Heart right ventricle (tissue), 16 donors: ENCODE measurements at regions of chr3 and their contacts with region 1.

Region 1: DNA sequence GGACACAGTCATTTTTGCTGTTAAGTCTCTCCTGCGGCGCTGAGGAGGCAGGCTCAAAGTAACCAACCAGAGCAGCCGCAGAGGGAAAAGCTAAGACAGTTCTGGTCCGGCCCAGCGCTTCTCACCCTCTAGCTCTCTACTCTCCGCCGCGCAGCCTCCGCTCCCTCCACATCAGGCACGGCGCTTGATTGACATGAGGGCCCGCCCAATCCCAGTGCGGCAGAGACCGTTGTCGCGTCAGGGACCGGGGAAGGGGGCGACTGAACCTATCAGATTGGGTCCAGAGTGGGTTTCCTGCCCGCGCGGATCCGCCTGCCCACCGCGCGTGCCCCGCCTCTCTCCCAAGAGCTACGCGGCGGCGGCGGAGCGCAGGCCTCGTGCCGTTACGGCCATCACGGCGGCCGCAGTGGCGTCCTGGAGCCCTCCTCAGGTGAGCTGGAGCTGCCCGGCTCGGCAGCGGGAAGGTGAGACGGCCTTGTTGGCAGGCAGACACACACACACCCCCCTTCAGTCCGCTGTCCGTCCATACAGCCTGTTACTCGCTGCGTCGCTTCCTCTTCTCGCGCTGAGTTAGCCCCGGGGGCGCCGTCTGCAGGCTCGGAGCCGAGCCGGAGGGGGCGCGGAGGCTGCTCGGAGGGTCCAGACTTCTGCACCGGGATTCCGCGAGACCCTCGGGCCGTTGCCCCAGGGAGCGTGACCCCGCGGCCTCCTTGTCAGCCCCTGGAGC is at the start of gene NCK1:
- DNase-seq: peak; percentile 98 to 99
- ATAC-seq: peak; percentile 98 to 100 (median 99)
- H3K4me3 ChIP-seq: peak within 1 kb of the TSS; percentile 58 to 98 (median 93)
- H3K27ac ChIP-seq: peak within 1 kb of the TSS; percentile 81 to 97 (median 94)
- H3K4me1 ChIP-seq: peaks cover 0 to 60% (median 35%) of the 10 kb centered on the region in 9 donors
- H3K27me3 ChIP-seq: no peaks in the 10 kb centered on the region
- CTCF ChIP-seq: peak in 4 of 9 donors; percentile 21 to 42 (median 31)
- total RNA-seq, gene NCK1: 17.0 to 31.8 (median 23.0) TPM

Region 2: GRCh38 chr3:136818769-136819391 is 43.2 kb before region 1 on chr3 and contains the start of gene SLC35G2:
- intact Hi-C with region 1: loop called in 5 of 10 experiments (anchors 2 to 5 kb)
- DNase-seq: peak; percentile 61 to 72
- ATAC-seq: peak; percentile 75 to 93 (median 88)
- H3K4me3 ChIP-seq: peak within 1 kb of the TSS; percentile 59 to 77 (median 72)
- H3K27ac ChIP-seq: peak within 1 kb of the TSS; percentile 80 to 93 (median 90)
- H3K4me1 ChIP-seq: peaks cover 0 to 32% (median 17%) of the 10 kb centered on the region in 9 donors
- H3K27me3 ChIP-seq: peaks cover 0 to 43% (median 0%) of the 10 kb centered on the region in 7 donors
- CTCF ChIP-seq: peak in 4 of 9 donors; percentile 6 to 34 (median 28)
- total RNA-seq, gene SLC35G2: 1.7 to 5.1 (median 2.4) TPM

Region 3: GRCh38 chr3:136929984-136930670 is 68.1 kb after region 1 on chr3:
- intact Hi-C with region 1: loop called in 4 of 10 experiments (anchors 5 to 10 kb)
- DNase-seq: peak; percentile 25 to 62
- ATAC-seq: peak in 7 of 8 donors; percentile 72 to 87 (median 84)
- H3K4me3 ChIP-seq: peak overlapping the region; percentile 14 to 51 (median 39)
- H3K27ac ChIP-seq: peak overlapping the region in 9 of 10 donors; percentile 9 to 74 (median 47)
- H3K4me1 ChIP-seq: peaks cover 0 to 67% (median 43%) of the 10 kb centered on the region in 9 donors
- H3K27me3 ChIP-seq: no peaks in the 10 kb centered on the region
- CTCF ChIP-seq: no peak

Region 4: DNA sequence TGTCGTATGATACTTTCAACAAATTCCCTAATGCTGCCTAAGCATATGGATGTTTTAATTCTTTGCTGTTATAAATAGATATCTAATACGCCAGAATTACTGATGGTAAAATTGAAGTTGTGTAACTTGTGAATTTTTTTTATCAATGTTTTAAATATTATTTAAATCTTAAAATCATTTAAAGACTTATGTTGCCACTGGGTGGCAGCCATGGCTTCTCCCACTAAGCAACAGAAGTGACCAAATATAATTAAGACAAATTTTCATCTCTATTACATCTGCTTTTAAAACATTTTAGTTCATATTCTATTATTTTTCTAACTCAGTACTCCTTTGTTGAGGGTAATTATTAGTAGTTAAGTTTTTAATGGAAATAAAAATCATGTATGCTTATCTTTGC is 87.7 kb after region 1 on chr3:
- intact Hi-C with region 1: loop called in 1 of 10 experiments (anchors 10 kb)
- DNase-seq: no peak
- ATAC-seq: no peak
- H3K4me3 ChIP-seq: no peak overlapping the region
- H3K27ac ChIP-seq: peak overlapping the region in 1 of 10 donors; percentile 17
- H3K4me1 ChIP-seq: peaks cover under 1 to 49% (median 20%) of the 10 kb centered on the region in 9 donors
- H3K27me3 ChIP-seq: no peaks in the 10 kb centered on the region
- CTCF ChIP-seq: peak in 4 of 9 donors; percentile 23 to 42 (median 33)